ENCODE measurements at regions of chr6 and their contacts with region 1.

Region 1: GRCh38 chr6:111709615-111710398 is 104.1 kb upstream of the TRAF3IP2 start:
- DNase-seq: no peak
- H3K4me3 ChIP-seq: no peak overlapping the region
- CTCF ChIP-seq: peak; percentile 41

Region 2: GRCh38 chr6:111692327-111693164 is 17.3 kb before region 1 on chr6:
- CTCF ChIA-PET with region 1: interaction called, 18 read pairs
- POLR2A ChIA-PET with region 1: no interaction called
- DNase-seq: no peak
- H3K4me3 ChIP-seq: no peak overlapping the region
- CTCF ChIP-seq: no peak

Region 3: DNA sequence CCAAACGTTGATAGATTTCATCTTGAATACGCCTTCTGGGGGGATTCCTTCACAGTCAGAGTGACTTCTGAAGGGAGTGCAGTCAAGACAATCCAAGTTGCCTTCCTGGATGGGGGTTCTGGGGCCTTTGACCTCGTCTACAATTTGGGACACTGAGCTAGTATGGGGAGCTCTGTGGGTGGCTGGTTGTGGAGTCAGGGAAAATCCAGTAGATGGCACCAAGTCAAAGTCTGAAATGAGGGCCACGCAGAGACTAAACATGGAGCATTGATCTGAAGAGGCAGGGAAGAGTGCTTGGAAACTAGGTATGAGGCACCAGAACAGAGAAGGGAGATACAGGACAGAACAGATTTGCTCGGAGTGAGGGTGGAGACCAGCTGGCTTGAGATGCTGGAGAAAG is 300.5 kb after region 1 on chr6:
- CTCF ChIA-PET with region 1: interaction called, 16 read pairs
- POLR2A ChIA-PET with region 1: no interaction called
- DNase-seq: no peak
- H3K4me3 ChIP-seq: no peak overlapping the region
- CTCF ChIP-seq: no peak

Region 4: DNA sequence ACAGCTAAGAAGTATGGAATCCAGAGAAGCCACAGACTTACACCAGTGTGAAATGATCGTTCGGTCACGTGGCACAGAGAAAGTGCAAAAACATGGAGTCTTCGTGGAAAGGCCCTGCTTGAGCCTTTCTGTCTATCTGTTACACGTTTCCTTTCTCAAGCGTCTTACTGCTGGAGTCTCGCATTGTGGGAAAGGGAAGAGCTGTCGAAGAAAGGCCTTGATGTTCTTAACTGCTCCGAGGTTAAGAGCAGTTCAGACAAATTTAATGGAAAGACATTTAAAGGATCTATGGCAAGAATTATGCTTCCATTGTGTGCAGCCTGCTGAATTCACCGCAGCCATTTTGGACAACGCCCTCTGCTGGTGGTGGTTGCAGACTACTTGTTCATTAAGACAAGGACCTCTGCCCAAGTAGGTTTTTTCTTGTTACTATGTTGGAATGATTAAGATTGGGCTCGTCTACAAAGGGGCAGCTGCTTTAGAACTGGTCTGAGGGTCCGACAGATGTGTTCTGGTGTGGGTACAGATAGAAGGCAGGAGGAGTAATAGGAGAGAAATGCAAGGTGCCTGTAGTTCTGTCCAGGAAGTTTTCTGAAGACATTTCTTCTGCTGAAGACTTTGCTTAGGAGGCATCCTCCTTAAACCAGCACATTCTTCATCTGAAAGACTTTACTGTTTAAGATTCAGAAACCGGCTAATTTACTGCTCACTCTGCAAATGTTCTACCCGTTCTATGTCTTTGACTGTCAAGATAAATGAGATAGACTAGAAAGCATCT is 319.4 kb after region 1 on chr6:
- CTCF ChIA-PET with region 1: interaction called, 39 read pairs
- POLR2A ChIA-PET with region 1: no interaction called
- DNase-seq: no peak
- H3K4me3 ChIP-seq: no peak overlapping the region
- CTCF ChIP-seq: peak; percentile 61

Region 5: GRCh38 chr6:112163295-112164257 is 453.8 kb after region 1 on chr6:
- CTCF ChIA-PET with region 1: interaction called, 19 read pairs
- POLR2A ChIA-PET with region 1: no interaction called
- DNase-seq: no peak
- H3K4me3 ChIP-seq: no peak overlapping the region
- CTCF ChIP-seq: peak; percentile 94